ENCODE measurements at regions of chr19 and their contacts with region 1.

Region 1: DNA sequence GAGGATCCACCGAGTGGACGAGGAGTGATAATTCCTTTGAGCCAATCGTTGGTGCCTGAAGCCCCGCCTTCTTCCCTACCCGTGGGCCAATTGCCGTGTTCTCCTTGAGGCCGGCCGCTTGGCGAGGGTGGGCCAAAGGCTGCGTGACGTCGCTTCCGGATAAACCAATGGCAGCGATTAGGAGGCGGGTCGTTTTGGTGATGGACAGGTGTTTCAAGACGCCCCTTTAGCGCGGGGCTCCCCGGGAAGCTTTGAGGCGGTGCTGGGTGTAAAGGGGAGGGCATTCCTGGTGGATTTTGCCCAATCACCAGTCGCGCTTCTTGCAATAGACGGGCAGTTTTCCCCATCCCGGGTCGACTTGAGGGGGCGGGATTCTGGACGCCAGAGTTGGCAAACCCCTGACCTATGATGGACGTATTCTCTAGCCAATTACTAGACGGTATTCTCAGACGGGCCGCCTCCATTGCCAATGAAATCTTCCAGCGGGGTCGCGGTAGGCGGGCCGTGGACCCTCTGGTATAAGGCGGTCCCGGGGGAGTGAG is 310 bp upstream of the PRMT1 start:
- DNase-seq: peak; percentile 99
- H3K4me3 Mint-ChIP-seq: peak overlapping the region; percentile 98
- H3K27ac Mint-ChIP-seq: peak overlapping the region; percentile 96
- H3K4me1 Mint-ChIP-seq: peaks cover 23% of the 10 kb centered on the region
- H3K27me3 Mint-ChIP-seq: no peaks in the 10 kb centered on the region

Region 2: DNA sequence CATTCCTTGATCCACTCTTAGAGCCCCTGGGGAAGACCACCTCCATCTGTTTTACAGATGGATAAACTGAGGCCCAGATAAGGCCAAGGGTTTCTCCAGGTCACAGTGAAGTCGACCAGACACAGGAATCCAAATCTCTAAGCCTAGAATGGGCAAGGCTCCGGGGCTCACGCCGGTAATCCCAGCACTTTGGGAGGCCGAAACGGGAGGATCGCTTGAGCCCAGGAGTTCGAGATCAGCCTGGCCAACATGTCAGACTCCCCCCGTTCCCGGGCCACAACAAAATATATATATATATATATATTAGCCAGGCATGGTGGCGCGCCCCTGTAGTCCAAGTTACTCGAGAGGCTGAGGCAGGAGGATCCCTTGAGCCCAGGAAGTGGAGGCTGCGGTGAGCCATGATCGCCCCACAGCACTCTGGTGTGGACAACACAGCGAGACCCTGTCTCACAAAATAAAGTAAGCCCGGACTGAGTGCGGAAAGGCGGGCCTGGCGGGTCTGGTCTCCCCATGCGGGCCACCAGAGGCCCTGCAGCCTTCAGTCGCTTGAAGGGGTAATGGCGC is 190.0 kb before region 1 on chr19:
- intact Hi-C with region 1: no loop called
- DNase-seq: no peak
- H3K4me3 Mint-ChIP-seq: peak overlapping the region; percentile 93
- H3K27ac Mint-ChIP-seq: peak overlapping the region; percentile 88
- H3K4me1 Mint-ChIP-seq: peaks cover 20% of the 10 kb centered on the region
- H3K27me3 Mint-ChIP-seq: no peaks in the 10 kb centered on the region

Region 3: GRCh38 chr19:49497047-49497788 is 179.5 kb before region 1 on chr19:
- intact Hi-C with region 1: loop called (anchors 2 kb)
- DNase-seq: peak; percentile 73
- H3K4me3 Mint-ChIP-seq: peak overlapping the region; percentile 98
- H3K27ac Mint-ChIP-seq: peak overlapping the region; percentile 94
- H3K4me1 Mint-ChIP-seq: peaks cover 44% of the 10 kb centered on the region
- H3K27me3 Mint-ChIP-seq: no peaks in the 10 kb centered on the region

Region 4: DNA sequence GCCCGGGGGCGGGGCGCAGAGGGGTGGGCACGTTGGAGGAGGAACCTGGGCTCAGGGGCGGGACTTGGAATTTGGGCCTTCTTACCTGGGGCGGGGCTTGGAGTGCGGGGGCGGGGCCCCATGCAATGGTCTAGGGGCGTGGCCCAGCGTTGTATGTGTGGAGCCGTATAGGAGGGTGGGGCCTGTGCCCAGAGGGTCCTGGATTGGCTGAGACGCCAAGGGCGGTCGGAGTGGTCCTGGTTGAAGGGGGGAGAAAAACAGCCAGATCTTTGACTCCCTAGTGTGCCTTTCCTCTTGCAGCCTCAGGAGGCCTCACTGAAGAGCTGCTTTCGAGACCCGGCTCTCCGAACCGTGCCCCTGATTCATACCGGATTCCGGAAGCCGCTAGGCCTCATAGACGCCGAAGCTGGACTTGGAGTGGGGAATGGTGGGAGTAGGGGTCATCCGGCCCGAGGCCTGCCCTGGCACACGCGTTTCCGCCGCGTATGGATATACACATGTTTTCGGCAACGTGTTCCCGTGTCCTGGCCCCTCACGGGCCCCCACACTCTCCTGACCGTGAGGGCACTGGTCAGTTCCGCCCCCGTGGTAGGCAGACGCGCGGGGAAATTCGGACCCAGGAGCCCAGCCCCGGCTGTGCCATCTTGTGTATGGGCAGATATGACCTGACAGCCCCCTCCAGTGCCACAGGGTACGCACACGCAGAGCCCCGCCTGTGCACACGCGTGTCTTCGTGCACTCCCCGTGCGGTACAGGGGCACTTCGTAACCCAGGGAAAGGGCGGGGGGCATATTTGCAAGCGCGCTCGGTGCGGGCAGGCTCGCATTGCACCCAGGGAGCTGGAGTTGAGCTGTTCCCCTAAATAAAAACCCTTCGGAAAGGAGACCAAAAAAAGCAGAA is 86.4 kb before region 1 on chr19:
- intact Hi-C with region 1: loop called (anchors 1 kb)
- DNase-seq: peak; percentile 94
- H3K4me3 Mint-ChIP-seq: peak overlapping the region; percentile 83
- H3K27ac Mint-ChIP-seq: peak overlapping the region; percentile 82
- H3K4me1 Mint-ChIP-seq: peaks cover 22% of the 10 kb centered on the region
- H3K27me3 Mint-ChIP-seq: peaks cover 7% of the 10 kb centered on the region

Region 5: GRCh38 chr19:49665351-49666119 is 11.2 kb before region 1 on chr19 and contains the starts of genes BCL2L12 and IRF3:
- intact Hi-C with region 1: loop called (anchors 1 kb)
- DNase-seq: peak; percentile 98
- H3K4me3 Mint-ChIP-seq: peak within 1 kb of the TSS; percentile 95
- H3K27ac Mint-ChIP-seq: peak within 1 kb of the TSS; percentile 87
- H3K4me1 Mint-ChIP-seq: peaks cover 20% of the 10 kb centered on the region
- H3K27me3 Mint-ChIP-seq: no peaks in the 10 kb centered on the region
- total RNA-seq, gene BCL2L12: 66.2 and 72.7 TPM in 2 replicates
- total RNA-seq, gene IRF3: 135 and 147 TPM in 2 replicates

Region 6: DNA sequence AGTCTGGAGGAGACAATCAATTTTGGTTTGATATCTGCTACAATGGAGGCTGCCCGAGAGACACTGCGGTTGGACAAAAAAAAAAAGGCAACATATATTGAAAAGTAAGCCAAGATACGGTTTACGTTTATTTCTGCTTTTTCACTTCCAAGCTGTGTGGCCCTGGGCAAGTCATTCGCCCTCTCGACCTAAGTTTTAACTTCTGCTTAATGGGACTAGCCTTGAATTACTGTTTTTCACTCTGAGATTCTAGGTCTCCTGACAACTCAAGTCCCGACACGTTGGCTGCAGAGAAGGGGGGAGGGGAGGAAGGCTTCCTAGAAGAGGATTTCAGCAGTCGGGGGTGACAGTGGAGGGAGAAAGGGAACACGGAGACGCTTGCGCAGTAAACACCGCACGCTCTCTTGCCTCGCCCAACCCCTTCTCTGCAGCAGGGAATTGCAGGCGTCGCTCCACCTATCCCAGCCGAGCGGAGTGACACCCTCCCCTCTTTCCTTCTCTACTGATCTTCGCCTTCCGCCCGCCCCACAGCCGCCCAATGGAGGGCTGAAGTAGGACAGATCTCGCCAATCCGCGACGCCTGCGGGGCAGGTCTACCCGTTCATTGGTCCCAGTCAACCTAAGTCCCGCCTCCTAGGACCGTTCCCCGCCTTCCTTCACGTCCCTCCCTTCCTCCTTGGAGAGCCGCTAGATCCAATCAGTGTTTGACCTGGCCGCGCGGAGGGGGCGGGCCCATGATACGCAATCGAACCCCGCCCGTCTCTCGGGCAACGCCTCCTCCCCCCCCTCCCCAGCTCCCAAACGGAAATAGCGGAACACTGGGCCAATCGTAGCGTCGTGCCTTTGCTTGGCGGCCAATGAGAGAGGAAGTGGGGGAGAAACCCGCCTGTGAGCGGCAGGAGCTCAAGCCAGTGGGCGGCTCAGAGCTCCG is 89.5 kb after region 1 on chr19:
- intact Hi-C with region 1: loop called (anchors 2 kb)
- DNase-seq: peak; percentile 99
- H3K4me3 Mint-ChIP-seq: peak overlapping the region; percentile 91
- H3K27ac Mint-ChIP-seq: peak overlapping the region; percentile 89
- H3K4me1 Mint-ChIP-seq: peaks cover 18% of the 10 kb centered on the region
- H3K27me3 Mint-ChIP-seq: no peaks in the 10 kb centered on the region

Region 7: GRCh38 chr19:49869441-49870176 is 192.8 kb after region 1 on chr19:
- intact Hi-C with region 1: loop called (anchors 5 kb)
- DNase-seq: peak; percentile 92
- H3K4me3 Mint-ChIP-seq: no peak overlapping the region
- H3K27ac Mint-ChIP-seq: peak overlapping the region; percentile 86
- H3K4me1 Mint-ChIP-seq: peaks cover 27% of the 10 kb centered on the region
- H3K27me3 Mint-ChIP-seq: no peaks in the 10 kb centered on the region